ENCODE measurements at regions of chr19 and their contacts with region 1.

Region 1: GRCh38 chr19:13060964-13061927 is 41.4 kb downstream of the LYL1 start:
- DNase-seq: peak; percentile 89
- ATAC-seq: peak; percentile 78 to 80

Region 2: DNA sequence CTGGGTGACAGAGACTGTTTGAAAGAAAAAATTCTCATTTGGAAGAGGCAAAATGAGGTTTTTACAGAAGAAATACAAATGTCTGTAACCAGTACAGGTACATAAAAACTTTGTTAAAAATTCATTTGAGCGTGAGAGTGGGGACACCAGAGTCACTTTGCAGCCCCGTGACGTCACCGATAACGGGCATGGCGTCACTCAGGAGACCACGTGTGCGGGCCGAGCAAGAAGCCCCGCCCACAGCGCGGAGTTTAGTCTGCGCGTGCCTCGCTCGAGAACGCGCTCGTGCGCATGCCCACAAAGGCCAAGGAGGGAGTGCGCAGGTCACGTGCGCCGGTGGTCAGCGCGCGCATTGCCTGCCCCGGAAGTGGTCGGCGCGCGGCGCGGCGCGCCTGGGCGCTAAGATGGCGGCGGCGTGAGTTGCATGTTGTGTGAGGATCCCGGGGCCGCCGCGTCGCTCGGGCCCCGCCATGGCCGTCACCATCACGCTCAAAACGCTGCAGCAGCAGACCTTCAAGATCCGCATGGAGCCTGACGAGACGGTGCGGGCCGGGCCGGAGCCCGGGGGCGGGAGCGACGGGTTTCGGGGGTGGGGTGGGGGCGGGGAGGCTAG is 115.7 kb before region 1 on chr19 and contains the start of gene RAD23A:
- intact Hi-C with region 1: no loop called
- DNase-seq: peak; percentile 99
- ATAC-seq: peak; percentile 93 to 97
- total RNA-seq, gene RAD23A: 113 to 131 TPM

Region 3: GRCh38 chr19:12985049-12985776 is 76.0 kb before region 1 on chr19:
- intact Hi-C with region 1: loop called in 1 of 2 experiments (anchors 5 kb)
- DNase-seq: peak; percentile 68
- ATAC-seq: peak; percentile 66 to 78

Region 4: DNA sequence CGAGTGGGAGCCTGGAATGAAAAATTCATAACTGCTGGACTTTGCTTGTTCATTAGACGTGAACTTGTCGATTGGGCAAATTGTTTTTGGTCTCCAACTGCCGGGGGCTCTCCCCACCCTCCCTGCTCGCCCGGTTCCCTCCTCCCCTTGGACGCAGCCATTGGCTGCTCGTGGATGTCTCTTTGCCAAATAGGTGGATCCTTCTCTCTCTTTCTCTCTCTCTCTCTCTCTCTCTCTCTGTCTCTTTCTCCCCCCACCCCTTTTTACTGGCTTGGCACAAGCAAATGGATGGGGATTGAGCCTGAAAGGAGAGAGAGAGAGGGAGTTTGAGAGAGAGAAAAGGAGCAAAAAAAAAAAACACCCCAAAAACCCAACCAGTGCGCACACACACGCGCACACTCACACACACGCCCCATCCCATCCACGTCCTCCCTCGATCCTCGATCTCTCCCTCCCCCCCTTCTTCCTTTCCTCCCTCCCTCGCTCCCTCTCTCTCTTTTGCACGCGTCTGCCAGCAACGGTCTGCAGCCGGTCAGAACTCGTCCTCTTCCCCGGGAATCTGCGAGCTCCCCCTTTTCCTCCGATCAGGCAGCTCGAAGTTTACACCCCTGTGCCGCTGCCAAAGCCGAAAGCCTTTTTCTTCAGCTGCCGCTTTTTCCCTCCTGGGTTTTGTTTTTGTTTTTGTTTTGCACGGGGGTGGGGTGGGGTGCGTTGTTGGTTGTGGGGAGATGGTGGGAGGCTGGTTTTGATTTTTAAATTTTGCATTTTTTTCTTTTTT is 38.2 kb before region 1 on chr19:
- intact Hi-C with region 1: loop called in 1 of 2 experiments (anchors 5 kb)
- DNase-seq: peak; percentile 83
- ATAC-seq: peak; percentile 88 to 89

Region 5: DNA sequence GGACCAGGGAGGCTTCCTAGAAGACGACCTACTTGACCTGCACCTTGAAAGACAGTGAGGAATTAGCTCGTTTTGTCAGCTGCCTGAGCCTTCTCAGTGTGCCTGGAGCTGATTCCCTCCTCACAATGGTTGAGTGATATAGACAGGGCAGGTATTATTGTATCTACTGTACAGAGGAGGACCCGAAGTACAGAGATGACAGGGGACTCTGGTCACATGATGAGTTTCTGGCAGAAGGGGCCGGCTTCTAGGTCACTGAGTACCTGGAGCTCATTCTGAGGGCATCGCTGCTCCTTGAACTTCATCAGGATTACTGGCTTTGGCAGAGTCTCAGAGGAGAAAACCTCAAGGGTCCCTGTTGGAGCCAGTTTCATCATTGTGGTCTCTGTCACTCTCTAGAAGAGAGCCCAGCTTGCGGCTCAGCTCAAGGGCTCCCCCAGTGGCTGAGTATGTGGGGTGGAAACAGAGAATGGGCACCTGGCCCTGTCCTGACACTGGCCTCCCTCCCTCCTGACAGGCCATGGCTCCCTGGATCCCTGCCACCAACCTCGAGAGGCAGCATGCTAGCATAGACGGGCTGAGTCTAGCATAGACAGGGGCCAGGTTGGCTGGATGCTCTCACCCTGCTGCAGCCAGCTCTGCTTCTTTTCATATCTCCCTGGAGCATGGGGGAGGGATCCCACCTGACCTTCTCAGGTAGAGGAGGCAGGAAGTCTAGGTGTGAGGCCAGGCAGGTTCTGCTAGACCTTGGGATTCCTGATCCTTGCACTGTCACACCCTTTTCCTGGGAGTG is 27.2 kb before region 1 on chr19:
- intact Hi-C with region 1: no loop called
- DNase-seq: peak; percentile 75
- ATAC-seq: peak; percentile 57 to 60

Region 6: GRCh38 chr19:13104360-13104847 is 43.2 kb after region 1 on chr19:
- intact Hi-C with region 1: no loop called
- DNase-seq: peak; percentile 85
- ATAC-seq: peak; percentile 12 to 21

Region 7: DNA sequence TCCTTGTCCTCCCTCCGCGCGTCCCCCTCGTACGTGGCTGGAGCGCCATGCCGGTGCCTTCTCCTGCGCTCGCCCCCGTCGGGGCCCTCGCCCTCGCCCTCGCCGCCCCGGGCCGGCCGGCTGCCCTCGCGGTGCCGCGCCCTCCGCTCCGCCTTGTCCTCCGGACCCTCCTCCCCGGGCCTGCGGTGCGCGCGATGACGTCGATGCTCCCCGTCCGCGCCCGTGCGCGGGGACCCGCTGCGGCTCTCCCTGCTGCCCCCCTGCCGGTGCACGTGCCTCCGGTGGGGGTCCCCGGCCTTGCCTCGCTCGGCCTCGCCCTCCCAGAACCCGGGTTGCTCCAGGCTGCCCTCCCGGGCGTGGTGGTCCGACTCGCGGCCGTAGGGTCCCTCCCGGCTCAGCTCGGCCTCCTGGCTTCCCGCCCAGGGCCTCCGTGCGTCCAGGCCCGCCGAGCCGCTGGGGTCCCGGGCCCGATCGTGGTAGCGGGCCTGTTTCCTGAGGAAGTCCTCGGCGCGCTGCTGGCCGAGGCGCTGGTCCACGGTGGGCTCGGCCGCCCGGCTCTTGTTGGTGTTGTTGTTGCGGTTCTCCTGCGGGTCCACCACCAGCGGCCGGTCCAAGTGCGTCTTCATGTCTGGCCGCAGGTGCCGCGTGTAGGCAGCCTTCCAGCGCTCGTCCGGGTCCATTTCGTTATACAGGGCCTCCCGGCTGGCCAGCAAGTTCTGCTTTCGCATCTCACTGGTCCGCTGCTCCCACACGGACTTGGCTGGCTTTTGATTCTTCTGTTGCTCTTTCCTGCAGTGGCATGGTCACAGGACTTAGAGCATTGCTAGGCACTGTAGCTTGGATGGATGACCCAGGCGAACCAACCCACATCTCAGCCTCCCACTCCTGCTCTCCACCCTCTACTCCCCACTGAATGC is 237.6 kb after region 1 on chr19:
- intact Hi-C with region 1: no loop called
- DNase-seq: no peak
- ATAC-seq: peak in 1 of 2 donors; percentile 37